A673 (cell line): ENCODE measurements at regions of chr17 and their contacts with region 1.

Region 1: GRCh38 chr17:50547035-50547735 is at the start of gene SPATA20:
- DNase-seq: peak; percentile 93
- H3K4me3 ChIP-seq: peak within 1 kb of the TSS; percentile 58
- H3K27ac ChIP-seq: peak within 1 kb of the TSS; percentile 68
- H3K4me1 ChIP-seq: peaks cover 14% of the 10 kb centered on the region
- H3K27me3 ChIP-seq: no peaks in the 10 kb centered on the region
- CTCF ChIP-seq: peak; percentile 98
- total RNA-seq, gene SPATA20: 11.1 and 16.5 TPM in 2 replicates

Region 2: DNA sequence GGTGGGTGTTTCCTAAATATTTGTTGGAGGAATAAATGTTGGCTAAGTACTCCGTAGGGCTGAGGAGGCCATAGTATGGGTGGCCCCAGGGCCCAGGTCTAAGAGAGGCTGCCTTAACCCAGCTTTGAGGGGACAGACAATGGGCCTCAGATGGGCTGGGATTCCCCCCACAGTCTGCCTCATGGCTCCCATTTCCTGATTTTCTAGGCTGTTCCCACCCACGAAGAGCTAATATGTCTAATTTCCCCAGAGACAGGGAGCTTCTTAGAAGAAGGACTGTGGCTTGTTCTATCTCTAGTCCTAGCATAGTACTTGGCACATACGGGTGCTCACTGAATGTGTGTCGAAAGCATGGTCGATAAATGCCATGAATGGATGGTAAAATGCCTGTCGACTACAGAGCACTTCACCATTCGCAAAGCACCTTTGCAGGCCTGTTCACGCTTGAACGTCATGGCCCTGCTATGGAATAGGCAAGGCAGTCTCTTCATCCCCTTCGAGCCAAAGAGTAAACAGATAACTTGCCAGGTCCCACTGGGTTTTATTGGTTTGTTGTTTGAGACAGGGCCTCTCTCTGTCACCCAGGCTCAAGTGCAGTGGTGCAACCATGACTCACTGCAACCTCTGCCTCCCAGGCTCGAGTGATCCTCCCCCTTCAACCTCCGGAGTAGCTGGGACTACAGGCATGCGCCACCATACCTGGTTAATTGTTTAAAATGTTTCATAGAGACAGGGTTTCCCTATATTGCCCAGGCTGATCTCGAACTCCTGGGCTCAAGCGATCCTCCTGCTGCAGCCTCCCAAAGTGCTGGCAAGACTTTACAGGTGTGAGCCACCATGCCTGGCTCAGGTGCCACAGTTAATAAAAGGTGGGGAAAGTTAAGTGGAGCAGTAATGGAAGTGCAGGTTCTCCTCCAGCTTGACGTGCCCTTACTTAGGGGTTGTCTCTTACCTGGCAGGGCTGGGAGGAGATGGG is 88.2 kb before region 1 on chr17:
- CTCF ChIA-PET with region 1: no interaction called
- POLR2A ChIA-PET with region 1: no interaction called
- intact Hi-C with region 1: no loop called
- DNase-seq: no peak
- H3K4me3 ChIP-seq: no peak overlapping the region
- H3K27ac ChIP-seq: no peak overlapping the region
- H3K4me1 ChIP-seq: peaks cover 9% of the 10 kb centered on the region
- H3K27me3 ChIP-seq: no peaks in the 10 kb centered on the region
- CTCF ChIP-seq: no peak

Region 3: GRCh38 chr17:50668025-50668837 is 121.0 kb after region 1 on chr17:
- CTCF ChIA-PET with region 1: interaction called, 13 read pairs
- POLR2A ChIA-PET with region 1: no interaction called
- intact Hi-C with region 1: no loop called
- DNase-seq: peak; percentile 33
- H3K4me3 ChIP-seq: no peak overlapping the region
- H3K27ac ChIP-seq: no peak overlapping the region
- H3K4me1 ChIP-seq: no peaks in the 10 kb centered on the region
- H3K27me3 ChIP-seq: no peaks in the 10 kb centered on the region
- CTCF ChIP-seq: no peak

Region 4: DNA sequence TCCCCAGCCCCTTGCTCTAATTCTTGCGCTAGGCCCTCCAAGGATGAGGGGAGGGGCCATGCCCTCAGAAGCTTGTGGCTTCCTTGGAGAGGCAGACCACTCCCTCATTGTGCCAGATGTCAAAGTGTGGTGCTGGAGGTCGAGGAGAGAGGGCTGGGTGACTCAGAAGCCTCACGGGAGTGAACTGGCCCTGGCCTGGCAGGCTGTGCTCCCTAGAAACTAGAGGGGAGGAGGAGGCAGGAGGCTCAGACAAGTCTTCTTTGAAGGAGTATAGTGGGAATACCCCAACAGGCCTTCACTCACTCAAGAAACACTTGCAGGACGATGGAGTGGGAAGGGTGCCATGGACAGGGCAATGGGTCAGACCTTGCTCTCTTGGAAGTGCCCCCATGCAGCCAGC is 142.1 kb after region 1 on chr17:
- CTCF ChIA-PET with region 1: no interaction called
- POLR2A ChIA-PET with region 1: no interaction called
- intact Hi-C with region 1: loop called (anchors 2 kb)
- DNase-seq: no peak
- H3K4me3 ChIP-seq: no peak overlapping the region
- H3K27ac ChIP-seq: no peak overlapping the region
- H3K4me1 ChIP-seq: no peaks in the 10 kb centered on the region
- H3K27me3 ChIP-seq: no peaks in the 10 kb centered on the region
- CTCF ChIP-seq: no peak

Region 5: GRCh38 chr17:50816771-50817751 is 269.9 kb after region 1 on chr17:
- CTCF ChIA-PET with region 1: interaction called, 10 read pairs
- POLR2A ChIA-PET with region 1: no interaction called
- intact Hi-C with region 1: no loop called
- DNase-seq: peak; percentile 55
- H3K4me3 ChIP-seq: no peak overlapping the region
- H3K27ac ChIP-seq: no peak overlapping the region
- H3K4me1 ChIP-seq: peaks cover 5% of the 10 kb centered on the region
- H3K27me3 ChIP-seq: no peaks in the 10 kb centered on the region
- CTCF ChIP-seq: peak; percentile 92

Region 6: DNA sequence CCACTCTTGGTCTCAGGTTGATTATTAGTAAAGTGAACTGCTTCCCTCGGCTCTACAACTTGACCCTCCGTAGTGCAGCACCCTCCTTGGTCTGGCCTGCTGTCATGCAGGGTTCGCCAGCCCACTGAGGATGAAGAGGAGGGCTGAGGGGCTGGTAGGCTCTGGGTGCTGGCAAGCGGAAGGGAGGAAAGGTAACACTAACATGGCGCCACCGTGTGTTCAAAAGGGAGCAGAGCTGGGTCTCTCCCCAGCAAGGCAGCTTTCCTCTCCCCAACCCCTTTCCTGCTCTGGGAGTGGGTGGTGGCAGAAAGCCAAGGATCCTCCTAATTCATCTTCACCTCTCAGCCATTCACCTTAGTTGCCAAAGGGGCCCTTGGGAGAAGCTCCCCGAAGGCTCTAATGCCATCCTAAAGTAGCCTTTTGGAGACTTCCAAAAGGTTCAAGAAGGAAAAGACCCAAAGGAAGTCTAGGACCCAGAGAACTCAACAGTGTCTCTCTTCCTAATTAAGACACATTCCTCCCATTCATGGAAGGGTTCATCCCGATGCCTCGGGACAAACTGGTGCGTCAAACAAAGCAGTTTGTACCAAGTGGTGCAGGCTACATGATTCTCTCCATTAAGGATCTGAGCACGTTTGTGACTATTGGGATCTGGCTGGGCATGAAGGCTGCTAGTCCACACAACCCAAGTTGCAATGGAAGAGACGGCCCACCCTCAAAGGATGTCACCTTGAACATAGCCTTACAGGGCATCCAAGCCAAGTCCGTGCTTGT is 409.8 kb after region 1 on chr17:
- CTCF ChIA-PET with region 1: no interaction called
- POLR2A ChIA-PET with region 1: no interaction called
- intact Hi-C with region 1: loop called (anchors 5 kb)
- DNase-seq: peak; percentile 72
- H3K4me3 ChIP-seq: no peak overlapping the region
- H3K27ac ChIP-seq: no peak overlapping the region
- H3K4me1 ChIP-seq: peaks cover 34% of the 10 kb centered on the region
- H3K27me3 ChIP-seq: no peaks in the 10 kb centered on the region
- CTCF ChIP-seq: peak; percentile 88